ENCODE measurements at regions of chr16 and their contacts with region 1.

Region 1: GRCh38 chr16:2867987-2868789 is 10.2 kb upstream of the PRSS22 start:
- DNase-seq: peak; percentile 86 to 98 (median 92)
- ATAC-seq: peak; percentile 97
- H3K4me3 ChIP-seq: peak overlapping the region; percentile 79
- H3K4me3 Mint-ChIP-seq: peak overlapping the region; percentile 84
- H3K27ac ChIP-seq: peak overlapping the region; percentile 73 to 77
- H3K27ac Mint-ChIP-seq: peak overlapping the region; percentile 79
- H3K4me1 ChIP-seq: peaks cover 18% of the 10 kb centered on the region
- H3K4me1 Mint-ChIP-seq: peaks cover 20% of the 10 kb centered on the region
- H3K27me3 ChIP-seq: no peaks in the 10 kb centered on the region
- H3K27me3 Mint-ChIP-seq: no peaks in the 10 kb centered on the region
- CTCF ChIP-seq: peak; percentile 96

Region 2: DNA sequence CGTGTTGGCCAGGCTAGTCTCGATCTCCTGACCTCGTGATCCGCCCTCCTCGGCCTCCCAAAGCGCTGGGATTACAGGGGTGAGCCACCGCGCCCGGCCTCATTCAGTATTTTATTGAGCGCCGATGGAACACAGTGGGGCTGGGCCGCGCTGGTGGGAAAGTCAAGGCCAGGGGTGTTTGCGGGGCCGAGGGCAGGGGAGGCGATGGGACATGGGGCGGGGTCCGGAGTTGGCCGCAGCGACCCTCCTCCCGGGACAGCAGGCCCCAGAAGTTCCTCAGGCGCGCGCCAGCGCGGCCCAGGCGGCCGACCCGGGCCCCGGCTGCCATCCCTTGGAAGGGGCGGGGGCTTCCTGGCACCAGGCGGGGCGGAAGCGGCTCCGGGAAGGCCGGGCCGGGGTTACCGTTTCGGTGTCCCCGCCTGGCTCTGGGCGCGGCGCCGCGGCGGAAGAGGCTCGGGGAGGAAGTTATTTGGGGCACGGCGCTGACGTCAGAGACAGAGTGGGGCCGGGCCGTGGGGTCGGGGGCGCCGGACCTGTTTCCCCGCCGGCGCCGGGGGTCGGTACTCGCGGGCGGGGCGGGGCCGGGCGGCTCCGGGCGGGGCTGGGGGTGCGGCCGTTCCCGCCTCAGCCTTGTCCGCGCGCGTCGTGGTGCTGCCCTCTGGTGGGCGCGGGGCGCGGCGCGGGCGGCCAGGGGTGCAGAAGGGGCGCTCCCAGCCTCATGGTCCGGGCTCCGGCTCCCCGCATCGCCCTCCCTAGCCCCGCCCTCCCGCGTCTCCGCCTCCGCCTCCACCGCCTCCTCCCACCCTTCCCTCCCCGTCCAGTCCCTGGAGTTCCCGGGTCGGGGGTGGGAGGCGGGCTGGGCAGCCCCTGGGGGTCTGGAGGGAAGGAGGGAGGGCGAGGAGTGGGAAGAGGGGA is 147.2 kb before region 1 on chr16:
- CTCF ChIA-PET with region 1: no interaction called
- POLR2A ChIA-PET with region 1: no interaction called
- intact Hi-C with region 1: loop called in 1 of 2 experiments (anchors 5 kb)
- DNase-seq: peak; percentile 70 to 94 (median 82)
- ATAC-seq: peak; percentile 87
- H3K4me3 ChIP-seq: peak overlapping the region; percentile 55
- H3K4me3 Mint-ChIP-seq: peak overlapping the region; percentile 81
- H3K27ac ChIP-seq: peak overlapping the region in 1 of 2 donors; percentile 35
- H3K27ac Mint-ChIP-seq: peak overlapping the region; percentile 30
- H3K4me1 ChIP-seq: peaks cover 14% of the 10 kb centered on the region
- H3K4me1 Mint-ChIP-seq: no peaks in the 10 kb centered on the region
- H3K27me3 ChIP-seq: peaks cover 0 to 2% of the 10 kb centered on the region in 2 experiments
- H3K27me3 Mint-ChIP-seq: peaks cover 10% of the 10 kb centered on the region
- CTCF ChIP-seq: peak; percentile 59

Region 3: DNA sequence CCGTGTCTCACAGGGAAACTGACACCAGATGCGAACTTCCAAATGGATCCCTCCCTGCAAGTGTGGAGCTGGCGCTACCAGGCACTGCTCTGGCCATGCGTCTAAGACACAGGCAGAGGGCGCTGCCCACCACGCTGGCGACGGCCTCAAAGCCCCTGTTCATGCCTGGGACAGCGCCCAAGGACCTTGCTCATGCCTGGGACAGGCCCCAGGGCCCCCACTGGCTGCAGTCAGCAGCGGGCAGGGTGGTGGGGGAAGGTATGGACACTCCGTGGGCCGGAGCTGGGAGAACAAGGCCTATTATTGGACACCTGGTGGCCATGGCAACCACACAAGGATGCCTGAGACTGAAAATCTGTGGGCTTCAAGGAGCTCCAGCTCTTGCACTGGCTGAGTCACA is 29.3 kb before region 1 on chr16:
- CTCF ChIA-PET with region 1: interaction called, 27 read pairs
- POLR2A ChIA-PET with region 1: interaction called, 8 read pairs
- intact Hi-C with region 1: loop called (anchors 1 kb)
- DNase-seq: peak in 12 of 14 experiments; percentile 28 to 81 (median 52)
- ATAC-seq: peak; percentile 72
- H3K4me3 ChIP-seq: no peak overlapping the region
- H3K4me3 Mint-ChIP-seq: no peak overlapping the region
- H3K27ac ChIP-seq: no peak overlapping the region
- H3K27ac Mint-ChIP-seq: peak overlapping the region; percentile 33
- H3K4me1 ChIP-seq: peaks cover 46% of the 10 kb centered on the region
- H3K4me1 Mint-ChIP-seq: peaks cover 32% of the 10 kb centered on the region
- H3K27me3 ChIP-seq: no peaks in the 10 kb centered on the region
- H3K27me3 Mint-ChIP-seq: peaks cover 8% of the 10 kb centered on the region
- CTCF ChIP-seq: peak; percentile 51

Region 4: GRCh38 chr16:2883027-2883851 is 15.1 kb after region 1 on chr16 and contains the start of gene FLYWCH2:
- CTCF ChIA-PET with region 1: interaction called, 19 read pairs
- POLR2A ChIA-PET with region 1: interaction called, 31 read pairs
- intact Hi-C with region 1: loop called in 1 of 2 experiments (anchors 2 kb)
- DNase-seq: peak; percentile 98 to 100 (median 99)
- ATAC-seq: peak; percentile 77
- H3K4me3 ChIP-seq: peak within 1 kb of the TSS; percentile 75
- H3K4me3 Mint-ChIP-seq: peak within 1 kb of the TSS; percentile 93
- H3K27ac ChIP-seq: peak within 1 kb of the TSS; percentile 89 to 93
- H3K27ac Mint-ChIP-seq: peak within 1 kb of the TSS; percentile 99
- H3K4me1 ChIP-seq: peaks cover 16% of the 10 kb centered on the region
- H3K4me1 Mint-ChIP-seq: peaks cover 13% of the 10 kb centered on the region
- H3K27me3 ChIP-seq: no peaks in the 10 kb centered on the region
- H3K27me3 Mint-ChIP-seq: no peaks in the 10 kb centered on the region
- CTCF ChIP-seq: no peak
- total RNA-seq, gene FLYWCH2: 7.8 to 8.1 TPM

Region 5: GRCh38 chr16:2911580-2912329 is 43.6 kb after region 1 on chr16 and contains the start of gene FLYWCH1:
- CTCF ChIA-PET with region 1: interaction called, 10 read pairs
- POLR2A ChIA-PET with region 1: interaction called, 3 read pairs
- intact Hi-C with region 1: no loop called
- DNase-seq: peak; percentile 97 to 99 (median 98)
- ATAC-seq: peak; percentile 96
- H3K4me3 ChIP-seq: peak within 1 kb of the TSS; percentile 75
- H3K4me3 Mint-ChIP-seq: peak within 1 kb of the TSS; percentile 96
- H3K27ac ChIP-seq: peak within 1 kb of the TSS; percentile 46 to 70
- H3K27ac Mint-ChIP-seq: peak within 1 kb of the TSS; percentile 83
- H3K4me1 ChIP-seq: peaks cover 21% of the 10 kb centered on the region
- H3K4me1 Mint-ChIP-seq: peaks cover 33% of the 10 kb centered on the region
- H3K27me3 ChIP-seq: no peaks in the 10 kb centered on the region
- H3K27me3 Mint-ChIP-seq: no peaks in the 10 kb centered on the region
- CTCF ChIP-seq: no peak
- total RNA-seq, gene FLYWCH1: 84.8 to 97.0 TPM

Region 6: DNA sequence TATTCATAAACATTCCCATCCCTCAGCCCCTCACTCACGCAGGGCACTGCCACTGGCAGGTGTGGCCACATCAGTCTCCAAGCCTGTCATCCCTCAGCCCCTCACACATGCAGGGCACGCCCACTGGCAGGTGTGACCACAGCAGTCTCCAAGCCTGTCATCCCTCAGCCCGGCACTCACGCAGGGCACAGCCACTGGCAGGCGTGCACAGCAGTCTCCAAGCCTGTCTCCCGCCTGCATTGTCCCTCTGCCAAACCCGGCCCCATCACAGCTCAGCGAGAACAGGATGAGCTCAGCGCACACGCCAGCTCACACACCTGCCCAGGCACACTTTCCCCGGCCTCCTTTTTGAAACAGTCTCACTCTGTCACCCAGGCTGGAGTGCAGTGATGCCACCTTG is 84.5 kb after region 1 on chr16:
- CTCF ChIA-PET with region 1: no interaction called
- POLR2A ChIA-PET with region 1: no interaction called
- intact Hi-C with region 1: no loop called
- DNase-seq: peak in 1 of 14 experiments; percentile 19
- ATAC-seq: no peak
- H3K4me3 ChIP-seq: no peak overlapping the region
- H3K4me3 Mint-ChIP-seq: no peak overlapping the region
- H3K27ac ChIP-seq: no peak overlapping the region
- H3K27ac Mint-ChIP-seq: no peak overlapping the region
- H3K4me1 ChIP-seq: peaks cover 6% of the 10 kb centered on the region
- H3K4me1 Mint-ChIP-seq: no peaks in the 10 kb centered on the region
- H3K27me3 ChIP-seq: peaks cover 15 to 20% of the 10 kb centered on the region in 2 experiments
- H3K27me3 Mint-ChIP-seq: peaks cover 10% of the 10 kb centered on the region
- CTCF ChIP-seq: no peak